ENCODE measurements at regions of chr6 and their contacts with region 1.

Region 1: DNA sequence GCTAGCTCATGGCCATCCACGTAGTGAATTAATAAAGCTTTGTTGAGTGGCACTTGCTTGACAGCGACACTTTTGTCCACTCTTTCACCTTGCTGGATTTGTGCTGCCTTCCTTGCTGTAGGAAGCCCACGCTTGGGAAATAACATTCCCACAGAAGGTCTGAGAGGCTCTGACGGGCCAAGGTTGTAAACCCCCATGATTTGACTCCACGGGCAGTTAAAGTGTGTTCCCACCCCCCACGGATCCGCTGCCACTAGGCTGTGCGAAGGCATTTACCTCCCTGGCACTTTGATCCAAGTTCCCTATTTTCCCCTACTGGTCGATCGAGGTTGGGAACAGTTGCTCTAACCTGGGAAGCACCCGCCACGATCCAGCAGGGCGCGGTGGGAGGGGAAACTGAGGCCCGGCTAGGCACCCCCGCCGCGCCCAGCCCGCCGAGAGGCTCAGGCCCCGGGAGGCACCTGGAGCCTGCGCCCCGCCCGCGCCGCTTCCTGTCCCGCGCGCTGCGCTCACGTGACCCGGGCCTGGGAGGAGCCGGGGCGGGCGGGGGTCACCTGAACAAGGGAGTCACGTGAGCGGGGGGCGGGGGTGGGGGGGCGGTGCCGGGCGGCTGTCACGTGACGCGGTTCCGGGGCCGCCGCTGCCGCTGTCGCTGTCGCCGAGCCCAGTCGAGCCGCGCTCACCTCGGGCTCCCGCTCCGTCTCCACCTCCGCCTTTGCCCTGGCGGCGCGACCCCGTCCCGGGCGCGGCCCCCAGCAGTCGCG is at the start of gene IGF2R:
- DNase-seq: peak; percentile 95
- ATAC-seq: peak; percentile 89
- H3K4me3 Mint-ChIP-seq: peak within 1 kb of the TSS; percentile 92
- H3K27ac Mint-ChIP-seq: peak within 1 kb of the TSS; percentile 94
- H3K4me1 Mint-ChIP-seq: peaks cover 41% of the 10 kb centered on the region
- H3K27me3 Mint-ChIP-seq: peaks cover 17% of the 10 kb centered on the region
- total RNA-seq, gene IGF2R: 57.4 to 59.8 TPM

Region 2: GRCh38 chr6:159874435-159874834 is 94.2 kb before region 1 on chr6:
- CTCF ChIA-PET with region 1: no interaction called
- POLR2A ChIA-PET with region 1: no interaction called
- DNase-seq: no peak
- ATAC-seq: no peak
- H3K4me3 Mint-ChIP-seq: no peak overlapping the region
- H3K27ac Mint-ChIP-seq: no peak overlapping the region
- H3K4me1 Mint-ChIP-seq: peaks cover 10% of the 10 kb centered on the region
- H3K27me3 Mint-ChIP-seq: peaks cover 4% of the 10 kb centered on the region

Region 3: DNA sequence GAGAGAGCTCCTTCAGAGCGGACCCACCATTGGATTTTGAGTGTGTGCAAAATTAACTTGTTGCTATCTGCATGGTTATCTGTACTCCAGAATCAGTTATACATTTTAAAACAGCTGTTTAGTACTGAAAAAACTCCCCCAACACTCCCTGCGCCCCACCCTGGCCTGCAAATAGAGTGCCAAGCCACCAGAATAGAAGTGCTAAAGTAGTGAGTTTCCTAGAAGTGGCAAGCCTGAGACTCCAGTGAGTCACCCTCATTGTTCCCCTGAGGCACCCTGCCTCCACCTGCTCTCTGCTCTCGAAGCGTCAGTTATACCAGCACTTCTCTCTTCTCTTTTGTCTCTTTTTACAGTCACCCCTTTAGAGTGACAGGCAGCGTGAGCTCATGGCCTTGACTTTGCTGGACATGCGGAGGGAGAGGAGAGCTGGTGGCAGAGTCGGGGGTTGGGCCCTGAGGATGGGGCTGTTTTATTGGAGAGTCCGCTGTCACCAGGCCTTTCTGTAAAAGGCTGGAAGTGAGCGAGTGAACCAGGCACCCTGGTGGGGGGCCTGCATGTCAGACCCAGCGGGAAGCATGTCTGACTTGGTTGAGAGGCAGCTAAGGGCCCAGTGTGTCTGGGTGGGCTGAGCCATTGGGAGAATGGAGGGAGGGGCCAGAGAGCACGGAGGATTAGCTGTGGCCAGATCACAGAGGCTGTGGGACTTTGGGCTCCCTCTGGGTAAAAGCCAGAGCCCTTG is 10.7 kb after region 1 on chr6:
- CTCF ChIA-PET with region 1: interaction called, 14 read pairs
- POLR2A ChIA-PET with region 1: interaction called, 69 read pairs
- DNase-seq: peak; percentile 79
- ATAC-seq: peak; percentile 74
- H3K4me3 Mint-ChIP-seq: peak overlapping the region; percentile 57
- H3K27ac Mint-ChIP-seq: peak overlapping the region; percentile 84
- H3K4me1 Mint-ChIP-seq: peaks cover 93% of the 10 kb centered on the region
- H3K27me3 Mint-ChIP-seq: no peaks in the 10 kb centered on the region

Measured in activated CD8-positive, alpha-beta T cell treated with anti-CD3 and anti-CD28 coated beads, Interleukin-2, amount 10 ng/mL, durations not matched to agents 7 days and 5 days (primary cell).